Caco-2 (cell line): ENCODE measurements at regions of chr1 and their contacts with region 1.

Region 1: GRCh38 chr1:26145041-26145959 is 13.6 kb upstream of the FAM110D start:
- DNase-seq: peak; percentile 83 to 84
- H3K4me3 ChIP-seq: no peak overlapping the region
- H3K4me3 Mint-ChIP-seq: no peak overlapping the region
- H3K27ac Mint-ChIP-seq: no peak overlapping the region
- H3K4me1 ChIP-seq: no peaks in the 10 kb centered on the region
- H3K4me1 Mint-ChIP-seq: no peaks in the 10 kb centered on the region
- H3K27me3 ChIP-seq: no peaks in the 10 kb centered on the region
- H3K27me3 Mint-ChIP-seq: no peaks in the 10 kb centered on the region
- CTCF ChIP-seq: peak; percentile 62 to 63

Region 2: DNA sequence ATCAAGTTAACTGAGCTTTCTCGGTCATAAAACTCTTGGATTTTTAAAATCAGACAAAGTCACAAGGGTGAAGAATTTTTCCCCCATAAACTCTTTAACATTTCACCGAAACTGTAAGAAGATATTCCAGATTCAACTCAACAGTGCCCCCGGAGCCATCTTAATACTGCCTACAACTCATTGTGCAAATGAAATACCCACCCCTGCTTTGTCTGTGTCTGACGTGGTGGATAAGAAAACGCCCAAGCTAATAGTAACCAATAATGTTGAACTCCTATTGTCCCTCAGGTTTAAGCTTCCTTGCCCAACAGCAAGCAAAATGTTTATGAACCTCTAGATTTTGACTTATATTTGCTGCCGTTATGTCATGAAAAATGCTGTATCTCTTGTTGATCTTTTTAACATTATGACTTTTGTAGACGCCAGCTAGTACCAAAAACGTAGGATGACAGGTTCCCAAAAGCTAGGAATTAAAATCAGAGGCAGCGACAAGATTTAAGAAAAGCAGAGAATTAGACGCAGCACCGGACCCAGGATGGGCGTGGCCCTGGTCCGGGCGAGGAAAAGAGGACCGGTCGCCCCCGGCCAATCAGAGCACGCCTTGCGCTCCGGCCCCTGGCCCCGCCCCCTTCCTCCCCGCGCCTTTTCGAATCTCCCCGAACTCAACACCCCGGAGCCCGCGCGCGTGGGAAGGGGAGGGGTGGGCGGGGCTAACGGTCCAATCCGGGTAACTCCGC is 240.2 kb before region 1 on chr1:
- CTCF ChIA-PET with region 1: no interaction called
- POLR2A ChIA-PET with region 1: no interaction called
- intact Hi-C with region 1: no loop called
- DNase-seq: peak; percentile 90 to 93
- H3K4me3 ChIP-seq: peak overlapping the region; percentile 86
- H3K4me3 Mint-ChIP-seq: peak overlapping the region; percentile 91
- H3K27ac Mint-ChIP-seq: no peak overlapping the region
- H3K4me1 ChIP-seq: no peaks in the 10 kb centered on the region; the same call in 1 of the 2 replicates
- H3K4me1 Mint-ChIP-seq: peaks cover 7% of the 10 kb centered on the region
- H3K27me3 ChIP-seq: no peaks in the 10 kb centered on the region
- H3K27me3 Mint-ChIP-seq: no peaks in the 10 kb centered on the region
- CTCF ChIP-seq: no peak

Region 3: DNA sequence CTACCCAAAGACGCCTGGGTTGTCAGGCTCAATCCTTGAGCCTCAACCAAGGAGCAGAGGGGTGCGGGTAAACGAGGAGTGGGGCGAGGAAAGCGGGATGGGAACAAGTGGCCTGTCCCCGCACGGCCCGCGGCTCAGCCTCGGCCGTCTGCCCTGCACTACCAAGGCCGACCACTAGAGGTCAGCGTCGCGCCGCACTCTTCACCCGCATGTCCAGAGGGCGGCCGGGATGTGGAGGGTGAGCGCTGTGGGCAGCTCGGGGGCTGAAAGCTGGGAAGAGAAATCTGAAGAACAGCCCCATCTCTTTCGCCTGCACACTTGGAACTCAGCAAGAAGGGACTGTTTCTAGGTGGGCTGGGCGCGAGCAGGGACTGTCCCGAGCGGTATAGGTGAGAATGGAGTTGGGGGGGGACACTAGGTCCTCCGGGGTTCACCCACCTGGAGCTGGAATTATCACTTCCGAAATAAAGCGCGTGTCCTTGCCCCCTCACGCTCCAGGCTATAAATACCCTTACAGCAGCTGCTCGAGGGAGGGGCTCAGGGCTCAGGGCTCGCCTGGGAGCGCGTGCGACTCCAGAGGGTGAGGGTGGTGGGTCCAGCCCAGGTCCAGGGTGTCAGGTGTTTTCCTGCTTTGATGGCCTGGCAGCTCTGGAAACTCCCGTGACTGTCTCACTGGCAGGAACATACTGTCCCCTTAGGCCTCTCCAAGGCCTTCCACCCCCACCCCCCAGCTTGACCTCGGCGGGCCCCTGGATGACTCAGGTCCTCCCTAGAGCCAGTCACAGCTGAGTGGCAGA is 109.1 kb before region 1 on chr1:
- CTCF ChIA-PET with region 1: interaction called, 77 read pairs
- POLR2A ChIA-PET with region 1: interaction called, 5 read pairs
- intact Hi-C with region 1: loop called (anchors 1 kb)
- DNase-seq: peak; percentile 80 to 85
- H3K4me3 ChIP-seq: peak overlapping the region; percentile 86
- H3K4me3 Mint-ChIP-seq: peak overlapping the region; percentile 88
- H3K27ac Mint-ChIP-seq: peak overlapping the region; percentile 56
- H3K4me1 ChIP-seq: peaks cover 9% of the 10 kb centered on the region
- H3K4me1 Mint-ChIP-seq: peaks cover 8% of the 10 kb centered on the region
- H3K27me3 ChIP-seq: no peaks in the 10 kb centered on the region
- H3K27me3 Mint-ChIP-seq: no peaks in the 10 kb centered on the region
- CTCF ChIP-seq: peak; percentile 86 to 90

Region 4: GRCh38 chr1:26102526-26102925 is 42.8 kb before region 1 on chr1:
- CTCF ChIA-PET with region 1: interaction called, 25 read pairs
- POLR2A ChIA-PET with region 1: no interaction called
- intact Hi-C with region 1: loop called (anchors 1 kb)
- DNase-seq: peak in 1 of 2 experiments; percentile 39
- H3K4me3 ChIP-seq: no peak overlapping the region
- H3K4me3 Mint-ChIP-seq: no peak overlapping the region
- H3K27ac Mint-ChIP-seq: peak overlapping the region; percentile 46
- H3K4me1 ChIP-seq: peaks cover 67% of the 10 kb centered on the region
- H3K4me1 Mint-ChIP-seq: peaks cover 23% of the 10 kb centered on the region
- H3K27me3 ChIP-seq: no peaks in the 10 kb centered on the region
- H3K27me3 Mint-ChIP-seq: no peaks in the 10 kb centered on the region
- CTCF ChIP-seq: no peak

Region 5: GRCh38 chr1:26161415-26162219 is 16.3 kb after region 1 on chr1:
- CTCF ChIA-PET with region 1: interaction called, 5 read pairs
- POLR2A ChIA-PET with region 1: no interaction called
- intact Hi-C with region 1: loop called (anchors 1 kb)
- DNase-seq: peak; percentile 59 to 80
- H3K4me3 ChIP-seq: peak overlapping the region; percentile 53
- H3K4me3 Mint-ChIP-seq: peak overlapping the region; percentile 72
- H3K27ac Mint-ChIP-seq: no peak overlapping the region
- H3K4me1 ChIP-seq: peaks cover 29% of the 10 kb centered on the region
- H3K4me1 Mint-ChIP-seq: peaks cover 14% of the 10 kb centered on the region
- H3K27me3 ChIP-seq: no peaks in the 10 kb centered on the region
- H3K27me3 Mint-ChIP-seq: no peaks in the 10 kb centered on the region
- CTCF ChIP-seq: peak in 1 of 2 experiments; percentile 18

Region 6: DNA sequence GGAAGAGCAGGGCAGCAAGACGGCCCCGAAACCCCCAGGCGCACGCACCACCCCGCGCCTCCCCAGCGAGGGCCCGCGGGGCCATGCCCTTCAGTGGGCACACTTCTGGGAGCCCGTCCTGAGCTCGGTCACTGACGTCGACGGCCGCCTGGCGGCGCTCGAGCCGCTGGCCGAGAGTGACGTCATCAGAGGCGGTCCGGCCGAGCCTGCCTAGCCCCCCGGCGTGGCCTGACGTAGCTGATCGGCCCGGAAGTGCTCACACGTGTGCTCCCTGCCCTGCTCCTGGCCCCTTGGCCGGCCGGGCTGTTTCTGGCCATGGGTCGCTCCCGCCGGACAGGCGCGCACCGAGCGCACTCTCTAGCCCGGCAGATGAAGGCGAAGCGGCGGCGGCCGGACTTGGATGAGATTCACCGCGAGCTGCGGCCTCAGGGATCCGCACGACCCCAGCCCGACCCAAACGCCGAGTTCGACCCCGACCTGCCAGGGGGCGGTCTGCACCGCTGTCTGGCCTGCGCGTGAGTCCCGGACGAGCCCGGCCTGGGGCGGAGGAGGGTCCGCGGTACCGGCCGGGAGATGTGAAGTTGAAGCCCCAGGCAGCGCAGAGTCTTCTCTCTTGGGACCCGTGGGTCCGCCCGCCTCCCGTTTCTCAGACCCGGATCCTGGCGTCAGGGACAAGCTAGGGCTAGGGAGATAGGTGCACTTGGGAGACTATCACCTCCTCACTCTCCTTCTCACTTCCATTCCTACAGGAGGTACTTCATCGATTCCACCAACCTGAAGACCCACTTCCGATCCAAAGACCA is 24.6 kb after region 1 on chr1 and contains the start of gene ZNF593:
- CTCF ChIA-PET with region 1: interaction called, 14 read pairs
- POLR2A ChIA-PET with region 1: no interaction called
- intact Hi-C with region 1: no loop called
- DNase-seq: peak; percentile 90 to 92
- H3K4me3 ChIP-seq: peak within 1 kb of the TSS; percentile 81
- H3K4me3 Mint-ChIP-seq: peak within 1 kb of the TSS; percentile 79
- H3K27ac Mint-ChIP-seq: peak within 1 kb of the TSS; percentile 84
- H3K4me1 ChIP-seq: no peaks in the 10 kb centered on the region
- H3K4me1 Mint-ChIP-seq: peaks cover 2% of the 10 kb centered on the region
- H3K27me3 ChIP-seq: no peaks in the 10 kb centered on the region
- H3K27me3 Mint-ChIP-seq: no peaks in the 10 kb centered on the region
- CTCF ChIP-seq: peak; percentile 71 to 81
- total RNA-seq, gene ZNF593: 50.0 and 50.8 TPM in 2 replicates